H1 (cell line): ENCODE measurements at regions of chrX and their contacts with region 1.

Region 1: GRCh38 chrX:154370882-154371770 is 3.3 kb downstream of the FLNA start:
- DNase-seq: peak; percentile 56 to 82
- H3K4me3 ChIP-seq: peak overlapping the region; percentile 82 to 96 (median 90)
- H3K27ac ChIP-seq: peak overlapping the region; percentile 97
- H3K4me1 ChIP-seq: peaks cover 0 to 18% (median 11%) of the 10 kb centered on the region in 4 experiments; a peak in 6 of 7 replicates
- H3K27me3 ChIP-seq: no peaks in the 10 kb centered on the region; a peak in 2 of 7 replicates
- CTCF ChIP-seq: no peak
- EP300 ChIP-seq: no peak
- POLR2A ChIP-seq: peak in 1 of 2 experiments; percentile 96; a peak in 2 of 3 replicates
- RAD21 ChIP-seq: no peak

Region 2: DNA sequence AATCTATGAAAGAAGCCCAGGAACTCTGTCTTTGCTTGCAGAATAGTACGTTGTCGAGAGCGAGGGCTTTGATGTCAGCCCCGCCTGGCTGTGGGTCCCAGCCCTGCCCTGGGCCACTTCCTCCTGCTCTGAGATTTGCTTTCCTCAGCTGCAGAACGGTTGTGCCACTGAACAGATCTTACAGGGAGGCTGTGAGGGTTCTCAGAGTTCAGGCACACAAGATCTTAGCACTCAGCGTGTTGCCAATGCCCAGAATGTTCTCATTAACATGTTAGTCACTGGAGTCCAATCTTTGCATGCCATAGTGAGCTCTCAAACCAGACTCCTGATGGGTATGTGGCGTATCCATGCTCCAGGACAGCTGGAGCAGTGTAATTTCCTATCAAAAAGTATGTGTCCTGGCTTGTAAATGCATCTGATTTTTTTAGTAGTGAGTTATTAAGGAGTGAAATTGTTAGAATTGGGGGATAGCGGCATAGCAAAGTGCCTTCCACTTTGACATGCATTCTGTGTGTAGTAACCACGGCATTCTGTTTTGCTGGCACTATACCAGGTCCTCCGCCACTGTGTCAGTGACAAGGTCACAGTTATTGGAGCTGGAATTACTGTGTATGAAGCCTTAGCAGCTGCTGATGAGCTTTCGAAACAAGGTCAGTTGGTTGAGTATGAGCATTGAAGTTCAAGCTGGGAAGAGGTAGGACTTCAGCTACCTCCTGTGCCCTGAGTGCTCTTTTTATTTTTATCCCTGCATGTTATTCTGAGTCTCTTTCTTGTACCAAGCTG is 43.9 kb before region 1 on chrX:
- CTCF ChIA-PET with region 1: no interaction called
- POLR2A ChIA-PET with region 1: no interaction called
- DNase-seq: no peak
- H3K4me3 ChIP-seq: no peak overlapping the region
- H3K27ac ChIP-seq: no peak overlapping the region
- H3K4me1 ChIP-seq: no peaks in the 10 kb centered on the region; a peak in 1 of 7 replicates
- H3K27me3 ChIP-seq: no peaks in the 10 kb centered on the region
- CTCF ChIP-seq: no peak
- EP300 ChIP-seq: no peak
- POLR2A ChIP-seq: no peak
- RAD21 ChIP-seq: no peak

Region 3: GRCh38 chrX:154384284-154384892 is 13.3 kb after region 1 on chrX:
- CTCF ChIA-PET with region 1: interaction called, 29 read pairs
- POLR2A ChIA-PET with region 1: interaction called, 104 read pairs
- DNase-seq: no peak
- H3K4me3 ChIP-seq: no peak overlapping the region
- H3K27ac ChIP-seq: no peak overlapping the region
- H3K4me1 ChIP-seq: peaks cover 0 to 19% (median 9%) of the 10 kb centered on the region in 4 experiments; a peak in 6 of 7 replicates
- H3K27me3 ChIP-seq: no peaks in the 10 kb centered on the region
- CTCF ChIP-seq: peak in 1 of 3 experiments; percentile 17; a peak in 1 of 4 replicates
- EP300 ChIP-seq: no peak
- POLR2A ChIP-seq: no peak
- RAD21 ChIP-seq: peak in 1 of 2 experiments; percentile 19; a peak in 1 of 4 replicates

Region 4: DNA sequence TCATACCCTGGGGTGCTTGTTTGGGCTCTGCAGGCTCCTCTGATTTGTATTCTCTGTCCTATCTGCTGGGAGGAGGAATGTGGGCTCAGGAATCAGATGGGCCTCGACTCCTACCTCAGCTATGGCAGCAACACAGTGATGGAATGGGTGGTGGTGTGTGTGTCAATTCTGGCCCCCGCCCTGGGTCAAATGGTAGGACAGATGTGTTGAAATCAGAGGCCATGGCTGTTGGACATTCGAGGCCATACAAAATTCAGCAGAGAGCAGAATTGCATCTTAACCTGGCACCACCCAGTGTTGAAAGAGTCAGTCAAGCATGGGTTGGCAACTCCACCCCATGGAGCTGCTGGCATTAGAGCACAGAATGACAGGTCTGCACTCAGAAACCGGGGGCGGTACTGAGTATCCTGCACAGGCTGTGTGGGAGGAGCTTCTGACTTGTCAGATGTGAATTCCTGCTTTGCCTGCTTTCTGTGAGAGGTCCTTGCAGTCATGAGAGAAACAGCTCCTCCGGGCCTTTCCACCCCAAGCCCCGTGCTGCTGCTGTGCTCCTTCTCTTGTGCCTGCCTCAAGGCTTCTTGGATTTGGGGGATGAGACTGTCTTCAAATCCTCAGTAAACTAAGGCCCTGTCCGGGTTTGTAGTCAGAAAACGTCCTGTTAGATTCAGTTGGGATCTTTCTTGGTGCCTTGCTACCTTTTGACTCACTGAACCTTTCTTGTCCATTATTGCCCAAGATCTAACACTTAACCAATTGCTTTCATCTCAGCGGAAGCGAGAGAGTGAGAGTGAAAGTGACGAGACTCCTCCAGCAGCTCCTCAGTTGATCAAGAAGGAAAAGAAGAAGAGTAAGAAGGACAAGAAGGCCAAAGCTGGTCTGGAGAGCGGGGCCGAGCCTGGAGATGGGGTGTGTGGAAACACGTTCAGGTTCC is 404.6 kb after region 1 on chrX:
- CTCF ChIA-PET with region 1: no interaction called
- POLR2A ChIA-PET with region 1: no interaction called
- DNase-seq: no peak
- H3K4me3 ChIP-seq: no peak overlapping the region
- H3K27ac ChIP-seq: no peak overlapping the region
- H3K4me1 ChIP-seq: no peaks in the 10 kb centered on the region
- H3K27me3 ChIP-seq: no peaks in the 10 kb centered on the region
- CTCF ChIP-seq: no peak
- EP300 ChIP-seq: no peak
- POLR2A ChIP-seq: peak in 1 of 2 experiments; percentile 20; a peak in 1 of 3 replicates
- RAD21 ChIP-seq: no peak